ENCODE measurements at regions of chr14 and their contacts with region 1.

Region 1: DNA sequence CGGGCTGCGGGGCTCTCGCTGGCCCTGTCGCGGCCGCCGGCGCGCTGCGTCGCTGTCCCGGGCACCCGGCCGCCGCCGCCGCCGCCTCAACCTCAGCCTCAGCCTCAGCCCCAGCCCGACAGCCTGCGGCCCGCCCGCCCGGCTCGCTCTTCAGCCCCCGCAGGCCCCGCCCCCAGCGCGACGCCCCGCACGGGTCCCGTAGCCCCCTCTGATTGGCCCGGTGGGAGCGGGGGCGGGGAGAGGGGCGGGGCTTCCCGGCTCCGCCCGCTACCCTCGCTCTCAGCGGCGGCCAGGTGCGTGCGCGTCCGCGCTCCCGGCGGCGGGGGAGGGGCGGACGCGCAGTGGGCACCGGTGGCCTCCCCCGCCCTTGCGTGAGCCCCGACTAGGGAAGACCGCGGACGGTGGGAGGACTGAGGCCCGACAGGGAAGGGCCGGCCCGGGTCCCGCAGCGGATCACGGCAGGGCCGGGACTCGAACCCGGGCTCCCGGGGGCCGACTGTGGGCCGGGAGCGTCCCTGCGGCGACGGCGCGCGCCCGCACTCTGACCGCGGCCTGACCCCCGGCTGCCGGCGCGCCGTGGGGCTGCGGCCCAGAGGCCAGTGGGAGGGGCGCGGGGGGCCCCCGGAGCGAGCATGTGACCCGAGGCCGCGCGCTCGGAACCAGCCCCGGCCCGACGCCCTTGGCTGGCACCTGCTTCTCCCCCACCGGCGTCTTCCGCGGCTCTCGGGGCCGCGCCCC is at the start of gene PPP1R13B:
- DNase-seq: peak; percentile 96
- ATAC-seq: peak; percentile 94
- total RNA-seq, gene PPP1R13B: 107 TPM

Region 2: GRCh38 chr14:103808403-103809001 is 39.1 kb before region 1 on chr14:
- intact Hi-C with region 1: loop called (anchors 5 kb)
- DNase-seq: peak; percentile 75
- ATAC-seq: peak; percentile 79

Region 3: GRCh38 chr14:103897075-103897947 is 49.7 kb after region 1 on chr14:
- intact Hi-C with region 1: no loop called
- DNase-seq: peak; percentile 65
- ATAC-seq: peak; percentile 74

Region 4: GRCh38 chr14:103920981-103921854 is 73.6 kb after region 1 on chr14:
- intact Hi-C with region 1: no loop called
- DNase-seq: peak; percentile 94
- ATAC-seq: peak; percentile 96

Measured in Right ventricle myocardium superior (tissue), 1 donor.